K562 (cell line): ENCODE measurements at regions of chr20 and their contacts with region 1.

Region 1: GRCh38 chr20:44080646-44081267 is 106.2 kb downstream of the JPH2 start:
- DNase-seq: peak; percentile 78 to 81 (median 79)
- ATAC-seq: peak; percentile 96
- H3K4me3 ChIP-seq: no peak overlapping the region
- H3K27ac ChIP-seq: no peak overlapping the region
- H3K4me1 ChIP-seq: no peaks in the 10 kb centered on the region
- H3K27me3 ChIP-seq: peaks cover 7 to 45% of the 10 kb centered on the region in 2 experiments
- CTCF ChIP-seq: peak; percentile 88 to 97 (median 94)
- EP300 ChIP-seq: no peak
- POLR2A ChIP-seq: no peak
- RAD21 ChIP-seq: peak; percentile 94 to 97

Region 2: GRCh38 chr20:43537921-43538877 is 542.6 kb before region 1 on chr20:
- CTCF ChIA-PET with region 1: no interaction called
- POLR2A ChIA-PET with region 1: no interaction called
- in situ Hi-C with region 1: loop called (anchors 10 kb)
- intact Hi-C with region 1: loop called (anchors 10 kb)
- DNase-seq: peak; percentile 75 to 87 (median 82)
- ATAC-seq: peak; percentile 94
- H3K4me3 ChIP-seq: no peak overlapping the region
- H3K27ac ChIP-seq: peak overlapping the region; percentile 65
- H3K4me1 ChIP-seq: peaks cover 18 to 24% of the 10 kb centered on the region in 2 experiments; a peak in 4 of 5 replicates
- H3K27me3 ChIP-seq: no peaks in the 10 kb centered on the region
- CTCF ChIP-seq: peak; percentile 81 to 97 (median 86)
- EP300 ChIP-seq: peak; percentile 94
- POLR2A ChIP-seq: no peak
- RAD21 ChIP-seq: peak; percentile 80 to 91

Region 3: GRCh38 chr20:43749734-43750294 is 330.9 kb before region 1 on chr20:
- CTCF ChIA-PET with region 1: interaction called, 28 read pairs
- POLR2A ChIA-PET with region 1: no interaction called
- in situ Hi-C with region 1: loop called (anchors 5 kb)
- intact Hi-C with region 1: loop called (anchors 1 kb)
- DNase-seq: peak; percentile 75 to 86 (median 85)
- ATAC-seq: peak; percentile 95
- H3K4me3 ChIP-seq: no peak overlapping the region
- H3K27ac ChIP-seq: no peak overlapping the region
- H3K4me1 ChIP-seq: peaks cover 5 to 6% of the 10 kb centered on the region in 2 experiments; a peak in 3 of 5 replicates
- H3K27me3 ChIP-seq: peaks cover 9 to 37% of the 10 kb centered on the region in 2 experiments
- CTCF ChIP-seq: peak; percentile 92 to 96 (median 93)
- EP300 ChIP-seq: no peak
- POLR2A ChIP-seq: no peak
- RAD21 ChIP-seq: peak; percentile 92 to 95

Region 4: DNA sequence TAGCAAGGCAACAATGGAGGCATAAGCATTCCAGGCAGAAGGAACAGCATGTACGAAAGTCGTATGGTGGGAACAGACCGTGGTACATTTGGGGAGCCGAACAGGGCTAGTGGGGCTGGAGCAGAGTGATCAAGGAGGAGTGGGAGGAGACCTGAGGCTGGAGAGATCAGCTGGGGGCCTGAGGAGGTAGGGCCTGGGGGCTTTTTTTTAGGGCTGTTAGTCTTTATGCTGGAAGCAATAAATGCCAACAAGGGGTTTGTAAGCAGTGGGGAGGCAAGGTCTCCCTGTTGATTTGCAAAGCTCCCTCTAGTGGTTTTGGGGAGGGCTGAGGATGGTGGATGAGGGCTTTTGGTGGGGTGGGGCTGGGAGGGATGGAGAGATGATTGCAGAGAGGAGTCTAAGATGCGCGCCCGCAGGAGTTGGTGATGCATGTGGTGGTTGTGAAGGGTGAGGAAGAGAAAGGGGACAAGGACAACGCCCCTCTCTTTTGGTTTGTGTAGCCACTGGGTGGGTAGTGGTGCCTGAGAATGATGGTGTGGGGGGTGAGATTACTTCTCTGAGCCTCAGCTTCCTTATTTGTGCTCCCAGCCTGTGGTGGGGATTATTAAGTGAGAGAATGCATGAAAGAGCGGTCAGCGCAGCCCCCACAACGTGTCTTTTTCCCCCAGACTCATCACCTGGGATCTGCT is 240.2 kb before region 1 on chr20:
- CTCF ChIA-PET with region 1: no interaction called
- POLR2A ChIA-PET with region 1: no interaction called
- in situ Hi-C with region 1: no loop called
- intact Hi-C with region 1: loop called (anchors 5 kb)
- DNase-seq: peak in 3 of 4 experiments; percentile 20 to 71 (median 59)
- ATAC-seq: peak; percentile 96
- H3K4me3 ChIP-seq: no peak overlapping the region
- H3K27ac ChIP-seq: no peak overlapping the region
- H3K4me1 ChIP-seq: no peaks in the 10 kb centered on the region
- H3K27me3 ChIP-seq: peaks cover 0 to 12% of the 10 kb centered on the region in 2 experiments; a peak in 3 of 5 replicates
- CTCF ChIP-seq: peak; percentile 53 to 66 (median 64)
- EP300 ChIP-seq: no peak
- POLR2A ChIP-seq: no peak
- RAD21 ChIP-seq: peak in 1 of 2 experiments; percentile 38; a peak in 2 of 4 replicates

Region 5: GRCh38 chr20:43983359-43983758 is 97.4 kb before region 1 on chr20:
- CTCF ChIA-PET with region 1: interaction called, 11 read pairs
- POLR2A ChIA-PET with region 1: no interaction called
- in situ Hi-C with region 1: no loop called
- intact Hi-C with region 1: loop called (anchors 1 kb)
- DNase-seq: peak; percentile 55 to 68 (median 65)
- ATAC-seq: peak; percentile 86
- H3K4me3 ChIP-seq: no peak overlapping the region
- H3K27ac ChIP-seq: no peak overlapping the region
- H3K4me1 ChIP-seq: no peaks in the 10 kb centered on the region
- H3K27me3 ChIP-seq: no peaks in the 10 kb centered on the region; a peak in 2 of 5 replicates
- CTCF ChIP-seq: peak; percentile 64 to 81 (median 70)
- EP300 ChIP-seq: no peak
- POLR2A ChIP-seq: no peak
- RAD21 ChIP-seq: peak; percentile 31 to 69; a peak in 3 of 4 replicates

Region 6: DNA sequence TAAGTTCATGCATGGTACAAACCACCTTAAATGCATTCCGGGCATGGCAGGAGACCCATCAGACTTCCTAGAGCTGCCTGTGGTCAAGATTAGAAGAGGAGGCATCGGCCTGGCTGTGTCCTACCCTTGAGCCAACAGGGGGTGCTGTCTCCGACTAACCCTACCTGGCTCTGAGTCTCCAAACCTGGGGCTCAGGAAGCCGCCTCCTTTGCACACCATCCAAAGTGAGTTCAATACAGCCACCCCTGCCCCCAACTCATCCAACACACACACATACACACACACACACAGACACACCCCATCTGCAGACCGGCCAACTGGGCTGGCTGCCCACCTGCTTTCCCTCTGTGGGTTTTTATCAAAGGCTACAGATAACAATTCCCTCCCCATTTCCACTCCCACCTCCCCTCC is 29.2 kb after region 1 on chr20:
- CTCF ChIA-PET with region 1: no interaction called
- POLR2A ChIA-PET with region 1: no interaction called
- in situ Hi-C with region 1: no loop called
- intact Hi-C with region 1: no loop called
- DNase-seq: peak; percentile 28 to 46 (median 38)
- ATAC-seq: peak; percentile 83
- H3K4me3 ChIP-seq: no peak overlapping the region
- H3K27ac ChIP-seq: no peak overlapping the region
- H3K4me1 ChIP-seq: no peaks in the 10 kb centered on the region; a peak in 1 of 5 replicates
- H3K27me3 ChIP-seq: peaks cover 10 to 28% of the 10 kb centered on the region in 2 experiments; a peak in 4 of 5 replicates
- CTCF ChIP-seq: peak; percentile 36 to 57 (median 45); a peak in 5 of 6 replicates
- EP300 ChIP-seq: no peak
- POLR2A ChIP-seq: no peak
- RAD21 ChIP-seq: no peak